PC-3 (cell line): ENCODE measurements at regions of chr5 and their contacts with region 1.

Region 1: DNA sequence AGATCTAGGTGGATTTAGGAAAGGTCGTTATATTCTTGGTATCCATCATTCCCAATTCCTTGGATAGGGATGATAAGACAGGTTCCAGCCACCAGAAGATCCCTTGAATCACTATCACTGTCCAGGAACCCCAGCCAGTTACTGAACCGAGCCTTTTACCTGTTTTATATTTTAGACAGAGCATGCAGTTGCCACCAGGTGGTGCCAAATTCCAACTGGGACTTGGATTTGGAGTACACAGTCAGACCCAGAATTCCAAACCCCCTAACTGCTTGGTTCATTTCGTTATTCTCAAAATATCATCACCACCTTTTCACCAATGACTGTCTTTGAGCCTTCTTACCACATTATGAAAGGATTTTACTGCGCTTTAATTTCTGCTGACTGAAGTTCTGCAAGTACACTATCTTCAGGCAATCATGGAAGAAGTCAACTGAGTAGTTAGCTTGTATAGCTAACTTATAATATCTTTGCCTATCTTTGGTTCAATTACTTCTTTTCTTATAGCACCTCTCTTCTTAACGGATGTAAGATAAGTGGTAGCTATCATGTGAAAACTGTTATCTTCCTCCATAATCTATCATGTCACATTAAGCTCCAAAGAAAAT is 191.8 kb downstream of the PRR16 start:
- DNase-seq: peak; percentile 64
- ATAC-seq: peak; percentile 66
- H3K4me3 ChIP-seq: no peak overlapping the region
- H3K27ac ChIP-seq: no peak overlapping the region
- H3K4me1 ChIP-seq: no peaks in the 10 kb centered on the region
- H3K27me3 ChIP-seq: no peaks in the 10 kb centered on the region
- CTCF ChIP-seq: peak; percentile 78

Region 2: GRCh38 chr5:120684749-120685415 is 28.9 kb after region 1 on chr5:
- CTCF ChIA-PET with region 1: no interaction called
- POLR2A ChIA-PET with region 1: no interaction called
- intact Hi-C with region 1: no loop called
- DNase-seq: no peak
- ATAC-seq: no peak
- H3K4me3 ChIP-seq: no peak overlapping the region
- H3K27ac ChIP-seq: no peak overlapping the region
- H3K4me1 ChIP-seq: peaks cover 33% of the 10 kb centered on the region
- H3K27me3 ChIP-seq: no peaks in the 10 kb centered on the region
- CTCF ChIP-seq: peak; percentile 25; the same call in 1 of the 2 replicates

Region 3: DNA sequence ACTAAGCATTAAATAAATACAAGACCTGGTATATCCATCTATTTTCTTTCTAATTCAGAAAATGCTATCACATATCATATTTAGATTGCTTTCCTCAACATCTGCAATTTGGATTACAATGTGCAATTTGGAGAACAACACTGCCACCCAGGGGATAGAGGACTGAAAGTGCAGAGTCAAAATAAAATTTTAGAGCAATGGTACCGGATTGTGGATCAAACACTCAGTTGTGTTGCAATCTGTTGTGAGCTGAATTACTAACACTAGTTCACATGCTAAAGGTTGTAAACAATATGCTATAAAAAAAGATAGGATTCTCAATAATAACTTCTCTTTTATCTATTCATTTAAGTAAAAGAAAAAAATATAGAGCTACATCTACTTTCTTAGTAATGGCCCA is 1293.9 kb after region 1 on chr5:
- CTCF ChIA-PET with region 1: no interaction called
- POLR2A ChIA-PET with region 1: no interaction called
- intact Hi-C with region 1: loop called (anchors 5 kb)
- DNase-seq: peak; percentile 62
- ATAC-seq: no peak
- H3K4me3 ChIP-seq: no peak overlapping the region
- H3K27ac ChIP-seq: no peak overlapping the region
- H3K4me1 ChIP-seq: no peaks in the 10 kb centered on the region
- H3K27me3 ChIP-seq: no peaks in the 10 kb centered on the region
- CTCF ChIP-seq: peak; percentile 73